PC-3 (cell line): ENCODE measurements at regions of chr13 and their contacts with region 1.

Region 1: DNA sequence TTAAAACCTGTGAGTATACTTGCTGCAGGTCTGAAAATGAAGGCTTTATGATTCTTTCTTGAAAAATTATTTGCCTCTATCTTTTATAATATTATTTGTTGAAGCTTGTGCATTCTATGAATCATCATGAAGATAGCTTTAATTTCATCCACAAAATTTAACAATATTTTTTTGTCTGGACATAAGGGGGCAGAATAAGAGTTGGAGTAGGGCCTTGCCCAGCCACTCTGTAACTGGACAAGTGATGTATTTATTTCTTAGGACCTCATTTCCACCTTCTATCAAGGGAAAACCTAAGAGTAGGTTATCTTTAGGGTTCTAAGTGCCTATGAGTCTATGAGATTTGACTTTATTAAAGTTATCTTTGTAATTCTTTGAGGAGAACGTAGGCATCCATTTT is 49.9 kb downstream of the N4BP2L1 start:
- DNase-seq: no peak
- ATAC-seq: no peak
- H3K4me3 ChIP-seq: no peak overlapping the region
- H3K27ac ChIP-seq: no peak overlapping the region
- H3K4me1 ChIP-seq: no peaks in the 10 kb centered on the region
- H3K27me3 ChIP-seq: no peaks in the 10 kb centered on the region
- CTCF ChIP-seq: 0 out of 2 replicates have a peak, but pooled peaks have one; percentile 15

Region 2: DNA sequence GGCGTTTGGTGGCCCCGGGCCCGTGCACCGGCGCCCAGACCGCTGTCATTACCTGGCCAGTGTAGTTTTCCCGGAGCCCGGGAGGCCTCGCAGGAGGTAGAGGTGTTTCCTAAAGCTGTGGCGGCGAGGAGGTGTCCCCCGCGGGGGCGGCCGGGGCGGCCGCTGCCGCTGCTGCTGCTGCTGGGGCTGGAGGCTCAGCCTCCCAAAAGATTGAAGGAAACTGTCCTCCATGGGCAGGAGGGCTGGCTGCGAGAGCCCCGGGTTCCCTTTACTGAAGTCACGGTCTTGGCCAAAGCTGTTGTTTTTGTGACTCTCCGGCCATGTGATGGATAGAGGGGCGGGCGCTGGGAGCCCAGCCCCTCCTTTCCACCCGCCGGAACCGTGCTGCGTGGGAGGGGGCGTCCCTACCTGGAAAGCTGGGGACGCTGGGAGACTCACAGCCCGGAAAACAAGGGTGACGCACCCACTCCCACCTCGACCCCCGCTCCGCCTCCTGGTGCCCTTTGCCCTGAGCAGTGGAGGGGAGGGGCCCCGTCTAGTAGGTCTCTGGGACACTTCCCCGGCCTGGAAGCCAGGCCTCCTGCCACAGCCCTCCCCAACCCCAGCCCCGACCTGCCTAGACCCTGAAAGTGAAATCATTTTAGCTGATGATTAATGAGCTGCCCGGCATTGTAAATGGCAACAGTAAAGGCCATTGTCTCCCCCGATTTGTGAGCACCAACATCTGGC is 50.0 kb after region 1 on chr13 and contains the start of gene N4BP2L1:
- CTCF ChIA-PET with region 1: no interaction called
- POLR2A ChIA-PET with region 1: no interaction called
- intact Hi-C with region 1: no loop called
- DNase-seq: peak; percentile 32
- ATAC-seq: peak; percentile 70
- H3K4me3 ChIP-seq: peak within 1 kb of the TSS; percentile 80
- H3K27ac ChIP-seq: no peak within 1 kb of the TSS
- H3K4me1 ChIP-seq: peaks cover 8% of the 10 kb centered on the region; the same call in 1 of the 2 replicates
- H3K27me3 ChIP-seq: no peaks in the 10 kb centered on the region
- CTCF ChIP-seq: no peak
- total RNA-seq, gene N4BP2L1: 0.15 and 0.17 TPM in 2 replicates

Region 3: DNA sequence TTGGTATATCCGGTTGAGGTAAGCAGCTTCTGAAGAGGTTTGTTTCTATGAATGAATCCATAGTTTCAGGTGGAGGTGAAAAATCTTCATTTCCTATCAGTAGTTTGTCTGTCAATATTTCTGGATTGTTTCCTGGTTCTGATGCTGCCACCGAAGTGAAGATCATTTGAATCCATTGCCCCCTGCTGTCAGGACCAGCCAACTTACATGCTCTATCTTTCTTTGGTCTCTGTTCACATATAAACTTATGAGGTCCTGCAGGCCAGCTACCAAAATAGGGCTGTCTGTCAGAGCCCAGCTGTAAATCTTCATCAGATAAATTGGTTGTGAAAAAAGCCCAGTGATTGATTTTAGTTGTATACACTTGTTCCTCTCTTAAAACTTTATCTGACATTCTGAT is 65.1 kb after region 1 on chr13:
- CTCF ChIA-PET with region 1: no interaction called
- POLR2A ChIA-PET with region 1: no interaction called
- intact Hi-C with region 1: loop called (anchors 2 kb)
- DNase-seq: peak; percentile 39
- ATAC-seq: peak; percentile 66
- H3K4me3 ChIP-seq: no peak overlapping the region
- H3K27ac ChIP-seq: no peak overlapping the region
- H3K4me1 ChIP-seq: no peaks in the 10 kb centered on the region
- H3K27me3 ChIP-seq: no peaks in the 10 kb centered on the region
- CTCF ChIP-seq: peak; percentile 57

Region 4: DNA sequence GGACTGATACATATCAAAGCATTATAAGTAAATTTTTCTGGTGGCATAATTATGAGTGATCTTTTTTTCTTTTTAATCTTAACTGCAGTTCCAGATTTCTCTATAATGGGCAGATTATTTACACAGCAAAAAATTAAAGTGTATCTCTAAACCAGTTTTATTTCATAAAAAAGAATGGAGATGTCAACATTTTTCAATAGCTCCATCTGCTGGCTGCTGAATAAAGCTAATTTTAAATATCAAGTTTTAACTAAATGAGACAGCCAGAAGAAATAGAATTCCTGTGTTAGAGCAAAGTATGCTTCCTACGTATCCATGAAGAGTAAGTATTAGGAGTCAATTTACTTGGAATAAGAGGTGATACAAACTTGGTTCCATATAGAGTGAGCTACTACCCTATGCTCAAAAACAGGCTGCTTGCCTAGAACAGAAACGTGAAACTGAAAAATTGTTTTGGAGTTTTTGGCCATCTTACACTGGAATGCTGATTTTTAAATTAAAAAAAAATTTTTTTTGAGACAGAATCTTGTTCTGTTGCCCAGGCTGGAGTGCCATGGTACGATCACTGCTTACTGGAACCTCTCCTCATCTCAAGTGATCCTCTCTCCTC is 203.3 kb after region 1 on chr13:
- CTCF ChIA-PET with region 1: no interaction called
- POLR2A ChIA-PET with region 1: no interaction called
- intact Hi-C with region 1: loop called (anchors 1 kb)
- DNase-seq: peak; percentile 44
- ATAC-seq: no peak
- H3K4me3 ChIP-seq: no peak overlapping the region
- H3K27ac ChIP-seq: no peak overlapping the region
- H3K4me1 ChIP-seq: peaks cover 4% of the 10 kb centered on the region; the same call in 1 of the 2 replicates
- H3K27me3 ChIP-seq: no peaks in the 10 kb centered on the region
- CTCF ChIP-seq: peak; percentile 68